MCF 10A (cell line): ENCODE measurements at regions of chr3 and their contacts with region 1.

Region 1: GRCh38 chr3:64837126-64837738 is 149.4 kb upstream of the ADAMTS9 start:
- DNase-seq: peak; percentile 50
- H3K4me3 Mint-ChIP-seq: no peak overlapping the region
- H3K27ac Mint-ChIP-seq: peak overlapping the region; percentile 4
- H3K4me1 Mint-ChIP-seq: peaks cover 5% of the 10 kb centered on the region
- H3K27me3 Mint-ChIP-seq: no peaks in the 10 kb centered on the region
- CTCF ChIP-seq: no peak

Region 2: GRCh38 chr3:64815195-64815631 is 22.0 kb before region 1 on chr3:
- CTCF ChIA-PET with region 1: no interaction called
- POLR2A ChIA-PET with region 1: no interaction called
- intact Hi-C with region 1: no loop called
- DNase-seq: no peak
- H3K4me3 Mint-ChIP-seq: no peak overlapping the region
- H3K27ac Mint-ChIP-seq: no peak overlapping the region
- H3K4me1 Mint-ChIP-seq: peaks cover 10% of the 10 kb centered on the region
- H3K27me3 Mint-ChIP-seq: no peaks in the 10 kb centered on the region
- CTCF ChIP-seq: no peak

Region 3: GRCh38 chr3:64878362-64878761 is 41.1 kb after region 1 on chr3:
- CTCF ChIA-PET with region 1: no interaction called
- POLR2A ChIA-PET with region 1: no interaction called
- intact Hi-C with region 1: loop called (anchors 2 kb)
- DNase-seq: peak; percentile 9
- H3K4me3 Mint-ChIP-seq: no peak overlapping the region
- H3K27ac Mint-ChIP-seq: no peak overlapping the region
- H3K4me1 Mint-ChIP-seq: no peaks in the 10 kb centered on the region
- H3K27me3 Mint-ChIP-seq: no peaks in the 10 kb centered on the region
- CTCF ChIP-seq: no peak